Activated T-helper 1 cell treated with anti-CD3 and anti-CD28 coated beads, Interleukin-12 subunit alpha, Interleukin-12 subunit beta, Interleukin-2, Interleukin-4 antibody, amounts not matched to agents 30 ng/mL and 10 ng/mL and 1 ng/mL, durations not matched to agents 14 hours and 24 hours and 36 hours (primary cell): ENCODE measurements at regions of chr10 and their contacts with region 1.

Region 1: DNA sequence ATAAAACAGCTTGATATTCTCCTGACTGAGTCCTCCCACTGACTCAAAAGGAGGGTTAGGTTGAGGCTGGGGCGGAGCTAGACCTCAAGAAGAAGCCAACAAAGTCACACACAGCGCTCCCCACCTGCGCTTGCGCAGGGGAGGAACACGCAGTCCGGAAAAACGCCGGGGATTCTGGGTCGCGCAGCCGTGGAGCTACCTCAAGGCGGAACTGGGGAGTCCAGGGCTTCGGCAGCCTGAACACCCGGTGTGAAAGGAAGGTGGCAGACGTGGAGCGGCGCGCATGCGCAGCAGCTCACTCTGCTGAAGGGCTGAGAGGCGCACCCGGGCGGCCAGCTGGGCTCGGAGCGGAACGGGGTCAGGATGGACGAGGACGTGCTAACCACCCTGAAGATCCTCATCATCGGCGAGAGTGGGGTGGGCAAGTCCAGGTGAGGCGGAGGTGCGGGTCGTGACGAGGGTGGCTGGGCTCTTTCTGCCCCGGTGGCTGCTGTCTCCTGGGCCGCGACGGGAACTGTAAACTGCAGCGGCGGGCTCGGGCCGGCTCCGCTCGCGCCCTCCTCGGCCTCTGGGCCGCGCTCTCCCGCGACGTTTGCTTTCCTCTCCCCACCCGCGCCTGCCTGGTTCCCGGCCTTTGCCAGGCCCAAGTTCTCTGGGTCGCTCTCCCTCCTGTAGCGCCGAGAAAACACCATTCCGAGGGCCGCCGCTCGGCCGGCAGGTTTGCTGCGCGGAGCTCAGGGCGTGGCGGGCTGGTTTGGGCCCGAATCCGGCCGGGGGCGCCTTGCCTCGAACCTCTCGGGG is at the start of gene RAB18:
- DNase-seq: peak; percentile 98
- H3K4me3 Mint-ChIP-seq: peak within 1 kb of the TSS; percentile 96
- H3K27ac Mint-ChIP-seq: peak within 1 kb of the TSS; percentile 96
- H3K4me1 Mint-ChIP-seq: peaks cover 38% of the 10 kb centered on the region
- H3K27me3 Mint-ChIP-seq: no peaks in the 10 kb centered on the region
- total RNA-seq, gene RAB18: 61.6 and 63.7 TPM in 2 replicates

Region 2: GRCh38 chr10:26437637-26438461 is 1066.4 kb before region 1 on chr10 and contains the start of gene APBB1IP:
- intact Hi-C with region 1: loop called (anchors 10 kb)
- DNase-seq: peak; percentile 40
- H3K4me3 Mint-ChIP-seq: peak within 1 kb of the TSS; percentile 95
- H3K27ac Mint-ChIP-seq: peak within 1 kb of the TSS; percentile 93
- H3K4me1 Mint-ChIP-seq: peaks cover 51% of the 10 kb centered on the region
- H3K27me3 Mint-ChIP-seq: no peaks in the 10 kb centered on the region
- total RNA-seq, gene APBB1IP: 39.6 and 43.6 TPM in 2 replicates

Region 3: GRCh38 chr10:27099916-27100812 is 404.0 kb before region 1 on chr10 and contains the start of gene ANKRD26:
- intact Hi-C with region 1: loop called (anchors 5 kb)
- DNase-seq: peak; percentile 96
- H3K4me3 Mint-ChIP-seq: peak within 1 kb of the TSS; percentile 86
- H3K27ac Mint-ChIP-seq: peak within 1 kb of the TSS; percentile 98
- H3K4me1 Mint-ChIP-seq: peaks cover 43% of the 10 kb centered on the region
- H3K27me3 Mint-ChIP-seq: no peaks in the 10 kb centered on the region
- total RNA-seq, gene ANKRD26: 4.3 and 7.0 TPM in 2 replicates

Region 4: GRCh38 chr10:27241652-27242472 is 262.3 kb before region 1 on chr10:
- intact Hi-C with region 1: loop called (anchors 1 kb)
- DNase-seq: peak; percentile 87
- H3K4me3 Mint-ChIP-seq: peak overlapping the region; percentile 89
- H3K27ac Mint-ChIP-seq: peak overlapping the region; percentile 93
- H3K4me1 Mint-ChIP-seq: peaks cover 29% of the 10 kb centered on the region
- H3K27me3 Mint-ChIP-seq: no peaks in the 10 kb centered on the region

Region 5: DNA sequence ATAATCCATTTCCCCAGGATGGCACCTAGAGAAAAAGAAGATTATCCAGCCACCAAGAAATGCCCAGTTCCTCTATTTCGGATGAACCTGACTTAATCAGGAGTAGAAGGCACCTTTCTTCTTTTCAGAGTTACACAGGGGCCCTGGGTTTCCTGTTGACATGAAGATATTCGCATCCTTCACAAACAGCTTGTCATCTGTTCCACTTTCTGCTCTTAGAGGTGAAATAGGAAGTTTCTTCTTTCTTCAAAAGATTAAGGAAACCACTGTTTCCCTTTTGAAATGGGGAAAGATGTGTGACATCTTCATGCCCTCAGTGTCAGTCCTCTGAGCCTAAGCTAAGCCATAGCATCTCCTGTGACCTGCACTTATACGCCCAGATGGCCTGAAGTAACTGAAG is 39.2 kb before region 1 on chr10:
- intact Hi-C with region 1: loop called (anchors 1 kb)
- DNase-seq: peak; percentile 18
- H3K4me3 Mint-ChIP-seq: peak overlapping the region; percentile 15
- H3K27ac Mint-ChIP-seq: peak overlapping the region; percentile 78
- H3K4me1 Mint-ChIP-seq: peaks cover 36% of the 10 kb centered on the region
- H3K27me3 Mint-ChIP-seq: peaks cover 3% of the 10 kb centered on the region

Region 6: DNA sequence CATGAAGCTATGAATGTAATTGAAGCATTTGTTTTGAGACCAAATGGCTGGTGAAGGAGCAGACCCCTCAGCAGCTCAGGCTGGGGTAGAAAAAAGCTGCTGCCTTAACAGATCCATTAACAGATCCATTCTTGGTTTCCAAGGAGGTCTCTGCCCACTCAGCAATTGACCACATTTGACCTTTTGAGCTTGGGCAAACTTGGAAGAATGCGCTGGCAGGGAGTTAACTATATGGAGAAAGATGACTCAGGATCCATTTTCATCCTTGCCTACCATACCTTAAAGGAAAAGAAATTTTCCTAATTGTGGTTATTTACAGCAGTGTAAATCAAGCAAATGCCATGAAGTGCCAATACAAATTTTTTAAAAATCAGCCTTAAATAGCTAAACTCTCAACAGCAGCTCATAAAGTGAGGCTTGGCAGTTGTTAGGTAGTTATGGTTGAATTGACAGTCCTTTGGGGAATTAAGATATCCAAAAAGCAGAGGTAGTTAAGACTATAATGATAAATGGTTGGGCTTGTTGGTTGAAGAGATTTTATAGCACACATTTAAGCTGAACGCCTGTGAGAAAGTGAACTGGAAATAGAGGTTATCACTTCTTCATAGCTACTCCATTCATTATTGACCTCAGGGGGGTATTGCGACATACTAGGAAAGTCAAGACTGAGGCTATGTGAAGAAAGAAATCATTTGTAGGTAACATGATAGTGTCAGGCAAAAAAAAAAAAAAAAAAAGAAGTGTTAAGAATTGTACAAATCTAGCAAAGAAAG is 157.5 kb after region 1 on chr10:
- intact Hi-C with region 1: loop called (anchors 5 kb)
- DNase-seq: no peak
- H3K4me3 Mint-ChIP-seq: no peak overlapping the region
- H3K27ac Mint-ChIP-seq: no peak overlapping the region
- H3K4me1 Mint-ChIP-seq: no peaks in the 10 kb centered on the region
- H3K27me3 Mint-ChIP-seq: peaks cover 26% of the 10 kb centered on the region

Region 7: GRCh38 chr10:27949528-27950241 is 445.5 kb after region 1 on chr10:
- intact Hi-C with region 1: no loop called
- DNase-seq: no peak
- H3K4me3 Mint-ChIP-seq: no peak overlapping the region
- H3K27ac Mint-ChIP-seq: no peak overlapping the region
- H3K4me1 Mint-ChIP-seq: no peaks in the 10 kb centered on the region
- H3K27me3 Mint-ChIP-seq: peaks cover 4% of the 10 kb centered on the region

Region 8: GRCh38 chr10:28302638-28303488 is 798.7 kb after region 1 on chr10 and contains the start of gene MPP7:
- intact Hi-C with region 1: loop called (anchors 1 kb)
- DNase-seq: peak; percentile 93
- H3K4me3 Mint-ChIP-seq: peak within 1 kb of the TSS; percentile 85
- H3K27ac Mint-ChIP-seq: peak within 1 kb of the TSS; percentile 41
- H3K4me1 Mint-ChIP-seq: peaks cover 32% of the 10 kb centered on the region
- H3K27me3 Mint-ChIP-seq: peaks cover 34% of the 10 kb centered on the region
- total RNA-seq, gene MPP7: 0.15 and 0.29 TPM in 2 replicates